Testis (tissue), 5 donors: ENCODE measurements at regions of chr1 and their contacts with region 1.

Region 1: GRCh38 chr1:83931658-83932253 is 67.2 kb downstream of the TTLL7 start:
- DNase-seq: peak; percentile 30
- H3K4me3 ChIP-seq: no peak overlapping the region
- H3K27ac ChIP-seq: no peak overlapping the region
- H3K4me1 ChIP-seq: no peaks in the 10 kb centered on the region
- H3K27me3 ChIP-seq: no peaks in the 10 kb centered on the region
- CTCF ChIP-seq: peak; percentile 40 to 67 (median 56)
- POLR2A ChIP-seq: no peak

Region 2: DNA sequence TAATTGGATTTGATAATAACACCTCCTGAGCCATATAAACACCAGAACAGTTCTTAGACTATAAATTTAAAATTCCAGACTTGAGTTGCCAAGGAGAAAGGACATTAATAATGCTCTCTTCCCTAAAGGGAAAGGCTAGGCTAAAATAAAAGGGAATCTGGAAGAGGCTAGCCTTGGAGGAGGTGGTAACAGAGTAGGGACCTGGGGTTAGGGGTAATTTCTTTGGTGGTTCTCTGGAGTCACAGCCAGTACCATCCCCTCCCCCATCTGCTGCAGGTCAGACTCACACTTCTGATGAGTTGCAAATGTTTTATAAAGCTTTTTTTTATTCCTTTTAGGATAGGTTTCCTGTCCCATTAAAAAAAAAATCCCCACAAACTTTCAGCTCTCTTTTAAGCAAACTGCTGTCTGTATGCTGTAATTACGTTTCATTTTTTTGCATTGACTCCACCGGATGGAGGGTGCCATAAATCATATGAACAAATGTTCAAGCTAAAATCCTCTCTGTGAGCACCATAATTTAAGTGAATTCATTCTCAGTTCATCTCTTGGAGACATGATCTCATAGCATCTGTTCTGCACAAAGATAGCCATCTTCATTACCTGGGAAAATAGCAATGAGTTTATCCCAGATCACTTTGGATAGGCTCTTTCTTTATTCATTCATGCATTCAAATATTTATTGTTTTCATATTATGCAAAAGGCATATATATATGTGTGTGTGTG is 312.4 kb before region 1 on chr1:
- intact Hi-C with region 1: no loop called
- DNase-seq: no peak
- H3K4me3 ChIP-seq: no peak overlapping the region
- H3K27ac ChIP-seq: no peak overlapping the region
- H3K4me1 ChIP-seq: no peaks in the 10 kb centered on the region
- H3K27me3 ChIP-seq: no peaks in the 10 kb centered on the region
- CTCF ChIP-seq: no peak
- POLR2A ChIP-seq: no peak

Region 3: DNA sequence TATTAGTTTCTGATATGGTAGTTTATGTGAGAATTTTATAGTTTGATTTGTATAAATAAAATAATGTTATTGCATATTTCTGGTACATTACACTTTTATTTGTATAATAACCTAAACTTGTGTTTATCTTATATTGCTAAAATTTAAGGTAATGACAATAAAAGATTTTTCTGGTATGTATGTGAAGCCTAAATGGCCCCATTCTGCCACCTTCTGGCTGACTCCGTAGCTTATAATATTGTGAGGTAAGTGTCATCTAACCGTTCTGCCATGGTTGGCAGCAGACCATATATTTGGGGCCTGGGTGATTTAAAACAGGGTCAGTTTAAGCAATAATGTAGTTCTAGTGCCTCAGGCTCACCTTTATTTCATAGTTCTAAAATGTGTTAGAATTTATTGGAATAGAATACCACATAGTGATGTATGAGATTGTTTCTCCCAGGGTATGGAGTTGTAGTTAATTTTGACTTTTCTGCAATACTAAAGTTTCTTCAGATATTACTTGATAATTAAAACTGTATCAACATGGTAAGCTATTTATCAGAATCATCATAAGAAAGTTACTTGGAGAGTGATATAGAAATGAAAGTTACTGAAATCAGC is 191.1 kb after region 1 on chr1:
- intact Hi-C with region 1: loop called (anchors 10 kb)
- DNase-seq: peak; percentile 79
- H3K4me3 ChIP-seq: no peak overlapping the region
- H3K27ac ChIP-seq: no peak overlapping the region
- H3K4me1 ChIP-seq: no peaks in the 10 kb centered on the region
- H3K27me3 ChIP-seq: no peaks in the 10 kb centered on the region
- CTCF ChIP-seq: peak; percentile 9 to 47 (median 44)
- POLR2A ChIP-seq: no peak

Region 4: DNA sequence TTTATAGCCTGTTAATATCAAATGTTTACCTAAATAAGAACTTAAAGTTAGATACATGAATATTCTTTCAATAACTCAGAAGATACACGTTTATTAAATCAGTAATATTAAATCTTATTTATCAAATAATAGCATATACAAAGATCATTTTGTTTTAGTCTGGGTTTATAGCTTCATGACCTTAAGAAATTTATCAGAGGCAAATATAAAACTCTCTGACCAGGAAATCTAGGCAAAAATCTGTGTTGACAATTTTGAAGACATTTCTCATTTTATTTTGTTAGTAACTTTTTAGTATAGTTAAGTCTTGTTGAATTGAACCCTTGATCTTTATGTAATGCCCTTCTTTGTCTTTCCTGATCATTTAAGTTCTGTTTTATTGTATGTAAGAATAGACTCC is 258.7 kb after region 1 on chr1:
- intact Hi-C with region 1: no loop called
- DNase-seq: no peak
- H3K4me3 ChIP-seq: no peak overlapping the region
- H3K27ac ChIP-seq: no peak overlapping the region
- H3K4me1 ChIP-seq: no peaks in the 10 kb centered on the region
- H3K27me3 ChIP-seq: no peaks in the 10 kb centered on the region
- CTCF ChIP-seq: no peak
- POLR2A ChIP-seq: no peak